CD4-positive, alpha-beta memory T cell (primary cell): ENCODE measurements at regions of chr14 and their contacts with region 1.

Region 1: GRCh38 chr14:95527387-95528002 is 7.4 kb upstream of the GLRX5 start:
- DNase-seq: peak; percentile 43 to 57 (median 52)
- H3K4me3 ChIP-seq: no peak overlapping the region
- H3K4me3 Mint-ChIP-seq: peak overlapping the region in 1 of 8 donors; percentile 52
- H3K27ac ChIP-seq: no peak overlapping the region
- H3K27ac Mint-ChIP-seq: peak overlapping the region; percentile 38 to 90 (median 66)
- H3K4me1 ChIP-seq: peaks cover 65% of the 10 kb centered on the region
- H3K4me1 Mint-ChIP-seq: peaks cover 51 to 80% (median 66%) of the 10 kb centered on the region in 4 donors
- H3K27me3 ChIP-seq: no peaks in the 10 kb centered on the region
- H3K27me3 Mint-ChIP-seq: no peaks in the 10 kb centered on the region

Region 2: GRCh38 chr14:95395098-95395737 is 132.3 kb before region 1 on chr14:
- CTCF ChIA-PET with region 1: no interaction called
- POLR2A ChIA-PET with region 1: no interaction called
- intact Hi-C with region 1: no loop called
- DNase-seq: no peak
- H3K4me3 ChIP-seq: no peak overlapping the region
- H3K4me3 Mint-ChIP-seq: no peak overlapping the region
- H3K27ac ChIP-seq: no peak overlapping the region
- H3K27ac Mint-ChIP-seq: no peak overlapping the region
- H3K4me1 ChIP-seq: no peaks in the 10 kb centered on the region
- H3K4me1 Mint-ChIP-seq: no peaks in the 10 kb centered on the region
- H3K27me3 ChIP-seq: no peaks in the 10 kb centered on the region
- H3K27me3 Mint-ChIP-seq: peaks cover 0 to 5% of the 10 kb centered on the region in 2 donors

Region 3: GRCh38 chr14:95424529-95424928 is 103.0 kb before region 1 on chr14:
- CTCF ChIA-PET with region 1: interaction called, 47 read pairs
- POLR2A ChIA-PET with region 1: interaction called, 4 read pairs
- intact Hi-C with region 1: loop called (anchors 1 kb)
- DNase-seq: no peak
- H3K4me3 ChIP-seq: no peak overlapping the region
- H3K4me3 Mint-ChIP-seq: no peak overlapping the region
- H3K27ac ChIP-seq: no peak overlapping the region
- H3K27ac Mint-ChIP-seq: no peak overlapping the region
- H3K4me1 ChIP-seq: no peaks in the 10 kb centered on the region
- H3K4me1 Mint-ChIP-seq: peaks cover 0 to 2% (median under 1%) of the 10 kb centered on the region in 4 donors
- H3K27me3 ChIP-seq: no peaks in the 10 kb centered on the region
- H3K27me3 Mint-ChIP-seq: no peaks in the 10 kb centered on the region

Region 4: DNA sequence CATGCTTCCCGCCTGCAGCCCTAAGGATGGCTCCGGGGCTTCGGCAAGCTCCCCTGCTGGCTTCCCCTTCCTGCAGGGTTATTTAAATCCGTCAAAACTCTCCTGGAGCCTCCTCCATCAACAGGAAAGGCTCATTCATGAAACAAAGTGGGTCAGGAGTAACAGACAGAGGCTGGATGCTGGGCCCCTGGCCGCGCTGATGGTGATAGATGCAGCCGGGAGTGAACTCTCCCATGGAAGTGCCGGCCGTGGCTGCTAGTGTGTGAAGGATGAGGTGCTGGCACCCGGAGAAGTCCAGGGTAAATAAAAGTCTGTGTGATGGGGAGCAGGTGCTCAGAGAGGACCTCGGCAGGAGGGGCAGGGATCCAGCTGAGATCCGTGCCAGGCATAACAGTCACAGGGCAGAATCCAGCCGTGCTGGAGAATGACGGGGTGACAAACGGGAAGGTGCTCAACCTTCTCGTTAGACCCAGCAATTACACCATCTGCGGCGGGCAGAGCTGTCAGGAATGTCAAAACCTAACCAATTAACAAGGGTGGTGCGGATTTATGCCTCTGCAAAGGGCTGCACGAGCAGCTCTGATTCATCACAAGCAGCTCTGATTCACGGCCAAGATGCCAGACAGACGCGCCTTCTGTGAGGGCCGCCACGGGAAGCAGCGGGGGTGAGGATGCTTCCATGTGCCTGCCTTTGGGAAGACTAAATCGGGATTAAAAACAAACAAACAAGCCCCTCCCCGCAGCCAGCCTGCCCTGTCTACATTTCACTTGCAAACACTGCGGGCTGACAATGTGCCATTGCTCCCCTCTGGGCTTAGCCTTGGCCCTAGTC is 66.6 kb before region 1 on chr14:
- CTCF ChIA-PET with region 1: interaction called, 845 read pairs
- POLR2A ChIA-PET with region 1: interaction called, 185 read pairs
- intact Hi-C with region 1: loop called (anchors 1 kb)
- DNase-seq: no peak
- H3K4me3 ChIP-seq: no peak overlapping the region
- H3K4me3 Mint-ChIP-seq: no peak overlapping the region
- H3K27ac ChIP-seq: peak overlapping the region; percentile 53
- H3K27ac Mint-ChIP-seq: peak overlapping the region; percentile 96 to 98 (median 97)
- H3K4me1 ChIP-seq: peaks cover 66% of the 10 kb centered on the region
- H3K4me1 Mint-ChIP-seq: peaks cover 42 to 71% (median 59%) of the 10 kb centered on the region in 4 donors
- H3K27me3 ChIP-seq: no peaks in the 10 kb centered on the region
- H3K27me3 Mint-ChIP-seq: no peaks in the 10 kb centered on the region

Region 5: DNA sequence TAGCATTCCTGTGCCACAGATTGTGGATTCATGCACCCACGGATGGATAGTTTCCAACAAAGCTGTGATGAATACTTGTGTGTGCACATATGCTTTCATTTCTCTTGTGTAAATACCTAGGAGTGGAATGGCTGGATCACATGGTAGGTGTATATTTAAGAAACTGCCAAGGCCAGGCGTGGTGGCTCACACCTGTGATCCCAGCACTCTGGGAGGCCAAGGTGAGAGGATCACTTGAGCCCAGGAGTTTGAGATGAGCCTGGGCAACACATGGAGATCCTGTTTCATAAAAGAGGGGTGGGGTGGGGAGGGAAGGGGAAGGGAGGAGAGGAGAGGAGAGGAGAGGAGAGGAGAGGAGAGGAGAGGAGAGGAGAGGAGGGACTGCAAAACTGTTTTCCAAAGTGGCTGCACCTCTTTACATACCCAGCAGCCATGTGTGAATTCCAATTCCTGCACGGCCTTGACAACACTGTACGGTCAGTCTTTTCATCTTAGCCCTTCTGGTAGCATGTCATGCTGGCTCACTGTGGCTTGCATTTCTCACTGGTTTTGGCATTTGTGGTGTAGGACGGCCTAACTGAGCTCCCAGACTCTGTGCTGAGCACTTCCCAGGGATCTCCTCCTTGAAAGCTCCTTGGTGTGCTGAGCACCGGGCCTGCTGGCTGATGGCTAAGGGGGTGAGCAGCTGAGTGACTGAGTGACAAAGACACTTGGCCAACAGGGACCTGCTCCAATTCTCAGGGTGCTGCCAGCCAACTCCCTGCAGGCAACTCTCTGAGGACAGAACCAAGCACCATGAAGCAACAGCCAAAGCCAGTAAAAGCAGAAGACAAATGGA is 38.9 kb before region 1 on chr14:
- CTCF ChIA-PET with region 1: interaction called, 15 read pairs
- POLR2A ChIA-PET with region 1: interaction called, 3 read pairs
- intact Hi-C with region 1: no loop called
- DNase-seq: no peak
- H3K4me3 ChIP-seq: no peak overlapping the region
- H3K4me3 Mint-ChIP-seq: no peak overlapping the region
- H3K27ac ChIP-seq: no peak overlapping the region
- H3K27ac Mint-ChIP-seq: peak overlapping the region in 6 of 7 donors; percentile 8 to 85 (median 62)
- H3K4me1 ChIP-seq: peaks cover 27% of the 10 kb centered on the region
- H3K4me1 Mint-ChIP-seq: peaks cover 30 to 72% (median 53%) of the 10 kb centered on the region in 4 donors
- H3K27me3 ChIP-seq: no peaks in the 10 kb centered on the region
- H3K27me3 Mint-ChIP-seq: no peaks in the 10 kb centered on the region

Region 6: GRCh38 chr14:95504135-95505029 is 23.1 kb before region 1 on chr14:
- CTCF ChIA-PET with region 1: interaction called, 10 read pairs
- POLR2A ChIA-PET with region 1: interaction called, 6 read pairs
- intact Hi-C with region 1: no loop called
- DNase-seq: no peak
- H3K4me3 ChIP-seq: no peak overlapping the region
- H3K4me3 Mint-ChIP-seq: peak overlapping the region in 4 of 8 donors; percentile 8 to 66 (median 49)
- H3K27ac ChIP-seq: no peak overlapping the region
- H3K27ac Mint-ChIP-seq: peak overlapping the region; percentile 48 to 92 (median 76)
- H3K4me1 ChIP-seq: peaks cover 75% of the 10 kb centered on the region
- H3K4me1 Mint-ChIP-seq: peaks cover 58 to 91% (median 76%) of the 10 kb centered on the region in 4 donors
- H3K27me3 ChIP-seq: no peaks in the 10 kb centered on the region
- H3K27me3 Mint-ChIP-seq: no peaks in the 10 kb centered on the region

Region 7: DNA sequence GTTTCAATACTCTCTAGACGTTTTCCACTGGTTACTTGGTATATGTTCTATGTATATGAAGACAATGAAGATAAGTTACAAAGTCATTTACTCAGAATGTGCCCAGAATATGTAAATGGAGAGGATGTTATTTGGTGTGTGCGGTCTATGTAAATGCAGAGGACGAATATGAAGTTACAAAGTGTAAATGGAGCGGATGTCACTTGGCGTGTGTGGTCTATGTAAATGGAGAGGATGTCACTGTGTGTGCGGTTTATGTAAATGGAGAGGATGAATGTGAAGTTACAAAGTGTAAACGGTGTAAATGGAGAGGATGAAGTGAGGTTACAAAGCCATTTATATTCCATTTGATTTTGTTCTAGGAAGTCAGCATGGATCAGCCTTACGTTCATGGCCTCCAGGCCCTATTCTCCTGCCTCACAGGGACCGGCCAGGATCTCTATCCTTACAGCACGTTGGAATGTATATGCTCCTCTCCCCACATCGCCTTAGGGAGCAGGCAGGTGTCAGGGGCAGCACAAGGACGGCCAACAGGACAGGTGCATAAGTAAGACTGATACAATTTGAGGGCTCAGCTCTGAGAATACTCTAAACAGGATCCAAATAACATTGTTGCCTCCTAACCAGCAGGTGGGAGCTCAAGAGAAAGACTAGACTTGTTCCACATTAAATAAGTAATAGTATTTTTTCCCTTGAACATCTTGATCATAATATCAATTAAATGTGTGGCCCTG is 49.7 kb after region 1 on chr14:
- CTCF ChIA-PET with region 1: no interaction called
- POLR2A ChIA-PET with region 1: no interaction called
- intact Hi-C with region 1: no loop called
- DNase-seq: peak in 1 of 5 donors; percentile 2
- H3K4me3 ChIP-seq: no peak overlapping the region
- H3K4me3 Mint-ChIP-seq: no peak overlapping the region
- H3K27ac ChIP-seq: no peak overlapping the region
- H3K27ac Mint-ChIP-seq: peak overlapping the region in 1 of 7 donors; percentile 2
- H3K4me1 ChIP-seq: no peaks in the 10 kb centered on the region
- H3K4me1 Mint-ChIP-seq: no peaks in the 10 kb centered on the region
- H3K27me3 ChIP-seq: no peaks in the 10 kb centered on the region
- H3K27me3 Mint-ChIP-seq: peaks cover 3 to 9% of the 10 kb centered on the region in 2 donors

Region 8: DNA sequence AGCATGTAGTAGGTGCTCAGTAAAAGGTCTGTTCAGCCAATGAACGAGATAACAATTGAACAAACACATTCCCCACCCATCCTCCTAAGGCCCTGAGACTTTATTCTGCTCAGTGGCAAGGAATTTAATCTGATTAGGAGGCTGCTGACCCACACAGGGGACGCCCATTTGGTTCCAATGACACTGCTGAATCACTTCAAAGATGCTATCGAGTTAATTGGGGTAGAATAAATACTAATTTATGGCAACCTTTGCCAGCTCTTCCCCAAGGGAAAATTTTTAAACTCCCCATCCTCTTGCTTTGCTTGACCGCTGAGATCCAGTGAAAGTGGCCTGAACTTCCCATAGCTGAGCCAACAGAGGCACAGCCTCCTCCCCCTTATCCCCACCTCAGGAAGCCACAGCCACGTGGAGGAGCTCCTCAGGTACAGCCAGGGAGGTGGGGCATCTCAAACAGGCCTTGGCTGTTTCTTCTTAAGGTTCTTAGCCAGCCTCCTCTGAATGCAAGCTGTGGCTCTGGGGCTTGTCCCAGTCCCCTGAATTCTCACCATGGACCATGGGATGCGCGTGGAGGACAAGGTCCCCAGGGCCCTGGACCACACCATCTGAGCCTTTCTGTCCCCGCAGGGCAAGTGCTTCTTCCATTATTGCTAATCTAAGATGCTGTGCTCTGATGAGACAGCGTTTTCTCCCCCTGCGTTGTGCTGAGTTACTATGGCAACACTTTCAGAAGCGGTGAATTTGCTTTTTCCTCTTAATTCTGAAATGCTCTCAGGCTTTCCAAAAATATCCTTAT is 538.4 kb after region 1 on chr14:
- CTCF ChIA-PET with region 1: no interaction called
- POLR2A ChIA-PET with region 1: no interaction called
- intact Hi-C with region 1: no loop called
- DNase-seq: no peak
- H3K4me3 ChIP-seq: no peak overlapping the region
- H3K4me3 Mint-ChIP-seq: no peak overlapping the region
- H3K27ac ChIP-seq: no peak overlapping the region
- H3K27ac Mint-ChIP-seq: no peak overlapping the region
- H3K4me1 ChIP-seq: no peaks in the 10 kb centered on the region
- H3K4me1 Mint-ChIP-seq: peaks cover 0 to 3% (median 1%) of the 10 kb centered on the region in 4 donors
- H3K27me3 ChIP-seq: no peaks in the 10 kb centered on the region
- H3K27me3 Mint-ChIP-seq: peaks cover 6 to 11% of the 10 kb centered on the region in 2 donors